ENCODE measurements at regions of chr11 and their contacts with region 1.

Region 1: GRCh38 chr11:33161120-33162005 is at the start of gene CSTF3:
- DNase-seq: peak; percentile 100
- H3K4me3 ChIP-seq: peak within 1 kb of the TSS; percentile 92
- H3K27ac ChIP-seq: peak within 1 kb of the TSS; percentile 74
- H3K4me1 ChIP-seq: peaks cover 14% of the 10 kb centered on the region
- H3K27me3 ChIP-seq: no peaks in the 10 kb centered on the region
- CTCF ChIP-seq: peak; percentile 46
- total RNA-seq, gene CSTF3: 22.9 to 29.9 TPM

Region 2: DNA sequence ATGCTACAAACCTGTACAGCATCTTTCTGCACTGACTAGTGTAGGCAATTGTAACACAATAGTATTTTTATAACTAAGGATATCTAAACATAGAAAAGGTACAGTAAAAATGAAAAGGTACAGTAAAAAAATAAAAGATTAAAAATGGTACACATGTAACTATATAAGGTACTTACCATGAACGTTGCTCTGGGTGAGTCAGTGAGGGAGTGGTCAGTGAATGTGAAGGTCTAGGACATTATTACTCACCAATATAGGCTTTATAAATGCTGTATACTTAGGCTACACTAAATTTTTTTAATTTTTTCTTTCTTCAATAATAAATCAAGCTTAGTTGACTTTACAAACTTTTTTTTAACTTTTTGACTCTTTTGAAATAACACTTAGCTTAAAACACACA is 517.8 kb before region 1 on chr11:
- intact Hi-C with region 1: no loop called
- DNase-seq: no peak
- H3K4me3 ChIP-seq: no peak overlapping the region
- H3K27ac ChIP-seq: no peak overlapping the region
- H3K4me1 ChIP-seq: no peaks in the 10 kb centered on the region
- H3K27me3 ChIP-seq: no peaks in the 10 kb centered on the region
- CTCF ChIP-seq: no peak

Region 3: GRCh38 chr11:33257897-33258630 is 96.7 kb after region 1 on chr11:
- intact Hi-C with region 1: loop called (anchors 5 kb)
- DNase-seq: peak; percentile 81
- H3K4me3 ChIP-seq: peak overlapping the region; percentile 86
- H3K27ac ChIP-seq: peak overlapping the region; percentile 100
- H3K4me1 ChIP-seq: peaks cover 5% of the 10 kb centered on the region
- H3K27me3 ChIP-seq: no peaks in the 10 kb centered on the region
- CTCF ChIP-seq: peak; percentile 20

Region 4: GRCh38 chr11:33687733-33688479 is 526.5 kb after region 1 on chr11:
- intact Hi-C with region 1: loop called (anchors 10 kb)
- DNase-seq: peak; percentile 60
- H3K4me3 ChIP-seq: no peak overlapping the region
- H3K27ac ChIP-seq: no peak overlapping the region
- H3K4me1 ChIP-seq: peaks cover 12% of the 10 kb centered on the region
- H3K27me3 ChIP-seq: no peaks in the 10 kb centered on the region
- CTCF ChIP-seq: peak; percentile 60

Measured in colonic mucosa (tissue), 4 donors.